OCI-LY7 (cell line): ENCODE measurements at regions of chr20 and their contacts with region 1.

Region 1: DNA sequence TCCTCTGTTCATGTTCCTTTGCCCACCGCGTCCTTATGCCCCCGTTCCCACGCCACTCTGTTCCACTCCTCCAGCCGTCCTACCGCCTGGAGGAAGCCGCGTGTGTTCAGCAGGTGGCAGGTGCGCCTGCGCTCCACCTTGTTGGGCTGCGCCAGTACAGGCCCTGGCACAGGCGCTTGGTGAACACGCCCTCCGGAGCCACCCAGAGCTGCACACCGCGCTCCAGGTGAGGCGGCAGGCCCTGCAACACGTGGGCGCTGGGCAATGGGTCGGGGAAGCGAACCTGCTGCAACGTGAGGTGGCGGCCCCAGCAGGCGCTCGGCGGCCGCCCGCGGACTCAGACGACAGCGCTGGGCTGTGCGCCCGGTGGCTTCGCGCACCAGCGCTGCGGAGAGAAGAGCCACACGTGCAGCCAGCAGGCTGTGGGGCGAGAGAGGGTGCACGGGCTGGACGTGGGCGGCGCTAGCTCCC is 4.1 kb upstream of the FOXS1 start:
- DNase-seq: no peak
- H3K4me3 ChIP-seq: no peak overlapping the region
- H3K27ac ChIP-seq: no peak overlapping the region
- H3K4me1 ChIP-seq: peaks cover 7% of the 10 kb centered on the region
- CTCF ChIP-seq: no peak

Region 2: GRCh38 chr20:31430568-31431115 is 418.8 kb before region 1 on chr20:
- CTCF ChIA-PET with region 1: no interaction called
- POLR2A ChIA-PET with region 1: no interaction called
- intact Hi-C with region 1: no loop called
- DNase-seq: no peak
- H3K4me3 ChIP-seq: no peak overlapping the region
- H3K27ac ChIP-seq: no peak overlapping the region
- H3K4me1 ChIP-seq: no peaks in the 10 kb centered on the region
- CTCF ChIP-seq: no peak

Region 3: GRCh38 chr20:31605031-31605901 is 244.2 kb before region 1 on chr20 and contains the start of gene ID1:
- CTCF ChIA-PET with region 1: no interaction called
- POLR2A ChIA-PET with region 1: no interaction called
- intact Hi-C with region 1: no loop called
- DNase-seq: peak; percentile 90
- H3K4me3 ChIP-seq: peak within 1 kb of the TSS; percentile 70
- H3K27ac ChIP-seq: no peak within 1 kb of the TSS
- H3K4me1 ChIP-seq: peaks cover 20% of the 10 kb centered on the region
- CTCF ChIP-seq: no peak
- total RNA-seq, gene ID1: 3.3 and 4.7 TPM in 2 replicates

Region 4: GRCh38 chr20:31764641-31765305 is 84.7 kb before region 1 on chr20:
- CTCF ChIA-PET with region 1: no interaction called
- POLR2A ChIA-PET with region 1: no interaction called
- intact Hi-C with region 1: no loop called
- DNase-seq: no peak
- H3K4me3 ChIP-seq: no peak overlapping the region
- H3K27ac ChIP-seq: no peak overlapping the region
- H3K4me1 ChIP-seq: no peaks in the 10 kb centered on the region
- CTCF ChIP-seq: no peak

Region 5: GRCh38 chr20:31822421-31823330 is 26.8 kb before region 1 on chr20:
- CTCF ChIA-PET with region 1: interaction called, 3 read pairs
- POLR2A ChIA-PET with region 1: no interaction called
- intact Hi-C with region 1: loop called (anchors 1 kb)
- DNase-seq: peak; percentile 72
- H3K4me3 ChIP-seq: no peak overlapping the region
- H3K27ac ChIP-seq: no peak overlapping the region
- H3K4me1 ChIP-seq: no peaks in the 10 kb centered on the region
- CTCF ChIP-seq: peak; percentile 98

Region 6: GRCh38 chr20:31951530-31952453 is 102.3 kb after region 1 on chr20 and contains the start of gene PDRG1:
- CTCF ChIA-PET with region 1: interaction called, 4 read pairs
- POLR2A ChIA-PET with region 1: interaction called, 3 read pairs
- intact Hi-C with region 1: loop called (anchors 1 kb)
- DNase-seq: peak; percentile 99
- H3K4me3 ChIP-seq: peak within 1 kb of the TSS; percentile 79
- H3K27ac ChIP-seq: peak within 1 kb of the TSS; percentile 62
- H3K4me1 ChIP-seq: peaks cover 19% of the 10 kb centered on the region
- CTCF ChIP-seq: peak; percentile 95
- total RNA-seq, gene PDRG1: 9.7 and 11.2 TPM in 2 replicates

Region 7: DNA sequence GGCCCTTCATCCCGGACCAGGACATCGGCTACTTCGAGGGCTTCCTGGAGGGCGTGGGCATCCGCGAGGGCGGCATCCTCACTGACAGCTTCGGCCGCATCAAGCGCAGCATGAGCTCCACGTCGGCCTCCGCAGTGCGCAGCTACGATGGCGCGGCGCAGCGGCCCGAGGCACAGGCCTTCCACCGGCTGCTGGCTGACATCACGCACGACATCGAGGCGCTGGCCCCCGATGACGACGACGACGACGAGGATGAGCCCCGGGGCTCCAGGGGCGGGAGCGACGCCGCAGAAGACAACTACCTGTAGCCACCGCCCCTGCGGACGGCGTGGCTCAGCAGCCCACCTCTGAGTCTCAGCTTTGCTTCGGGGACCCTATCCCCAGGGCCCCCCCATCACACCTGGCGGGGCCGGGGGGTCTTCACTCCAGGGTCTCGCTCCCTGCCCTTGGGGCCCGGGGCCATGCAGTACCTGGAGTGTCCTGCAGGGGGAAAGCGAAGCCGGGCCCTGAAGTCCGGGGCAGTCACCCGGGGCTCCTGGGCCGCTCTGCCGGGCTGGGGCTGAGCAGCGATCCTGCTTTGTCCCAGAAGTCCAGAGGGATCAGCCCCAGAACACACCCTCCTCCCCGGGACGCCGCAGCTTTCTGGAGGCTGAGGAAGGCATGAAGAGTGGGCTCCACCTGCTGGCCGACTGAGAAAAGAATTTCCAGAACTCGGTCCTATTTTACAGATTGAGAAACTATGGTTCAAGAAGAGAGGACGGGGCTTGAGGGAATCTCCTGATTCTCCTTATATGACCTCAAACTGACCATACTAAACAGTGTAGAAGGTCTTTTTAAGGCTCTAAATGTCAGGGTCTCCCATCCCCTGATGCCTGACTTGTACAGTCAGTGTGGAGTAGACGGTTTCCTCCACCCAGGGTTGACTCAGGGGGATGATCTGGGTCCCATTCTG is 181.8 kb after region 1 on chr20:
- CTCF ChIA-PET with region 1: no interaction called
- POLR2A ChIA-PET with region 1: no interaction called
- intact Hi-C with region 1: loop called (anchors 1 kb)
- DNase-seq: peak; percentile 66
- H3K4me3 ChIP-seq: peak overlapping the region; percentile 51
- H3K27ac ChIP-seq: no peak overlapping the region
- H3K4me1 ChIP-seq: peaks cover 32% of the 10 kb centered on the region
- CTCF ChIP-seq: peak; percentile 98

Region 8: DNA sequence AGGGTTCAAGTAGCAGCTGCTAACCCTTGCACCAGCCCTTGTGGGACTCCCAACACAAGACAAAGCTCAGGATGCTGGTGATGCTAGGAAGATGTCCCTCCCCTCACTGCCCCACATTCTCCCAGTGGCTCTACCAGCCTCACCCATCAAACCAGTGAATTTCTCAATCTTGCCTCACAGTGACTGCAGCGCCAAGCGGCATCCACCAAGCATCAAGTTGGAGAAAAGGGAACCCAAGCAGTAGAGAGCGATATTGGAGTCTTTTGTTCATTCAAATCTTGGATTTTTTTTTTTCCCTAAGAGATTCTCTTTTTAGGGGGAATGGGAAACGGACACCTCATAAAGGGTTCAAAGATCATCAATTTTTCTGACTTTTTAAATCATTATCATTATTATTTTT is 317.3 kb after region 1 on chr20:
- CTCF ChIA-PET with region 1: interaction called, 11 read pairs
- POLR2A ChIA-PET with region 1: no interaction called
- intact Hi-C with region 1: no loop called
- DNase-seq: no peak
- H3K4me3 ChIP-seq: no peak overlapping the region
- H3K27ac ChIP-seq: no peak overlapping the region
- H3K4me1 ChIP-seq: no peaks in the 10 kb centered on the region
- CTCF ChIP-seq: no peak